Activated CD4-positive, alpha-beta T cell treated with anti-CD3 and anti-CD28 coated beads, Interleukin-2, amount 10 ng/mL, durations not matched to agents 24 days and 14 days (primary cell): ENCODE measurements at regions of chr4 and their contacts with region 1.

Region 1: GRCh38 chr4:168831919-168832762 is 177.9 kb downstream of the CBR4 start:
- DNase-seq: peak; percentile 91
- H3K4me3 Mint-ChIP-seq: peak overlapping the region; percentile 83
- H3K27ac Mint-ChIP-seq: peak overlapping the region; percentile 82
- H3K4me1 Mint-ChIP-seq: peaks cover 17% of the 10 kb centered on the region
- H3K27me3 Mint-ChIP-seq: peaks cover 44% of the 10 kb centered on the region

Region 2: GRCh38 chr4:168480931-168481611 is 351.1 kb before region 1 on chr4:
- intact Hi-C with region 1: loop called (anchors 10 kb)
- DNase-seq: peak; percentile 85
- H3K4me3 Mint-ChIP-seq: peak overlapping the region; percentile 98
- H3K27ac Mint-ChIP-seq: peak overlapping the region; percentile 99
- H3K4me1 Mint-ChIP-seq: peaks cover 60% of the 10 kb centered on the region
- H3K27me3 Mint-ChIP-seq: no peaks in the 10 kb centered on the region

Region 3: GRCh38 chr4:168710353-168710946 is 121.7 kb before region 1 on chr4:
- intact Hi-C with region 1: loop called (anchors 5 kb)
- DNase-seq: peak; percentile 61
- H3K4me3 Mint-ChIP-seq: no peak overlapping the region
- H3K27ac Mint-ChIP-seq: no peak overlapping the region
- H3K4me1 Mint-ChIP-seq: peaks cover 11% of the 10 kb centered on the region
- H3K27me3 Mint-ChIP-seq: peaks cover 6% of the 10 kb centered on the region

Region 4: DNA sequence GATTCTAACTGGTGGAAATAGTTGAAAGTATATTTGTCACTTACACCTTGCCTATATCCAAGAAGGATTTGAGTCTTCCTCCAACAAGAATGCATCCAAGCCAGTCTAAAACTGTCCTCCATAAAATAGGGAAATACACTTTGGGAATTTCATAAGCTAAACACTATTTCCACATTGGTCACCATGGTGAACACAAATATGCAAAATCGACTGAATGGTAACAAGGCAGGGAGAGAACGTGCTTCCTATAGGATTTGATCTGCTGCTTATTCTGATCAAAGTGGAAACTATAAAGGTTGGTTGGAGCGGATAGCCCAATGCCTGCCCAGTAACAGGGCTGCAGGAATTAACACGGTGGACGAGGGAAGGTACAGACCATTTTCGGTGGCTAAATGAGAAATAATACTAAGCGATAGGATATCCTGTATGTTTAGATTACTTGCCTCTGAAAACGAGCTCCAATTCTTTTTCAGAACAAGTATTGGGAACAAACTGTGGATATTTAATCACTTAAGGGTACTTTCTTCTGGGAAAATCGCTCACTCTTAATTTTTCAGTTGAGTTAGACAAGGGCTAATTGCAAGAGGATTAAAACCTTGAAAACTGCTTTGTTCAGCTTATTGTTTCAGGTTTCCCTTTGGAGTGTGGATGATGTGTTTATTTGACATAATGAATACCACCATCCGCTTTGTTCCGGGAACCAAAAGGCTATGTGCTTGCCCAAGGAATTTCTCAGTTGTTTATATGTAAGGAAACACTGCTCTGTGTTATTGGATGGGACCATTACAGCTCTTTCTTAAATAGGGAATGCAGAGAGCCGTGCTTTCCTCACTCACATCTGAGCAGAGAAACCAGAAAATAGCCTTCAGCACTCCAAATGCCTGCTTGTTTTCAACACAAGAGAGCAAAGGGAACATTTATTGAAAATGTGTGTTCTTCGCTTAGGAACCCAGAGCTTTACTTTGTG is 16.5 kb before region 1 on chr4:
- intact Hi-C with region 1: loop called (anchors 2 kb)
- DNase-seq: no peak
- H3K4me3 Mint-ChIP-seq: no peak overlapping the region
- H3K27ac Mint-ChIP-seq: no peak overlapping the region
- H3K4me1 Mint-ChIP-seq: peaks cover 8% of the 10 kb centered on the region
- H3K27me3 Mint-ChIP-seq: peaks cover 40% of the 10 kb centered on the region

Region 5: GRCh38 chr4:168864821-168865541 is 32.8 kb after region 1 on chr4:
- intact Hi-C with region 1: loop called (anchors 1 kb)
- DNase-seq: no peak
- H3K4me3 Mint-ChIP-seq: no peak overlapping the region
- H3K27ac Mint-ChIP-seq: peak overlapping the region; percentile 79
- H3K4me1 Mint-ChIP-seq: peaks cover 48% of the 10 kb centered on the region
- H3K27me3 Mint-ChIP-seq: no peaks in the 10 kb centered on the region

Region 6: GRCh38 chr4:168877511-168878491 is 45.7 kb after region 1 on chr4:
- intact Hi-C with region 1: loop called (anchors 2 kb)
- DNase-seq: peak; percentile 80
- H3K4me3 Mint-ChIP-seq: peak overlapping the region; percentile 84
- H3K27ac Mint-ChIP-seq: peak overlapping the region; percentile 65
- H3K4me1 Mint-ChIP-seq: peaks cover 20% of the 10 kb centered on the region
- H3K27me3 Mint-ChIP-seq: peaks cover 43% of the 10 kb centered on the region

Region 7: DNA sequence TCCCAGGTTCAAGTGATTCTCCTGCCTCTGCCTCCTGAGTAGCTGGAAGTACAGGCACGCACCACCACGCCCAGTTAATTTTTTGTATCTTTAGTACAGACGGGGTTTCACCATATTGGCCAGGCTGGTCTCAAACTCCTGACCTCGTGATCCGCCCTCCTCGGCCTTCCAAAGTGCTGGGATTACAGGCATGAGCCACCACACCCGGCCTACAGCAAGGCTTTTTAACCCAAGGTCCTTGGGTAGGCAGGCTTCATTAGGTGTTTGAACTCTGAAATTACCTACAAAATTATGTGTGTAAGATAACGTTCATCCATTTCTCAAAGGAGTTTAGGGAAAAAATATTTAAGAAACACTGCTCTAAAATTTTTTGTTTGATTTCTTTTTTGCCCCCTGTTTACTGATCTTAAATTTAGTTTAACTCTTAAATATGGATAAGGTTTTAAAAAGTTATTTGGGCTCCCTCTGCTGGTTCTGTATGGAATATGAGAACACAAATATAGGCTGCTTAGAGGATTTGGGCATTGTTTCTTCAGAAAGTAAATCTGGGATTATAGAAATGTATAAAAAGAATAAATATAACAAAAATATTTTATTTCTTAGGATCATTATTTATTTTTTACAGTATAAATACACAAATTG is 85.1 kb after region 1 on chr4:
- intact Hi-C with region 1: loop called (anchors 5 kb)
- DNase-seq: peak; percentile 62
- H3K4me3 Mint-ChIP-seq: no peak overlapping the region
- H3K27ac Mint-ChIP-seq: no peak overlapping the region
- H3K4me1 Mint-ChIP-seq: no peaks in the 10 kb centered on the region
- H3K27me3 Mint-ChIP-seq: no peaks in the 10 kb centered on the region